ENCODE measurements at regions of chr9 and their contacts with region 1.

Region 1: GRCh38 chr9:71911253-71912074 is at the start of gene C9orf85:
- DNase-seq: peak; percentile 90 to 99 (median 96)
- ATAC-seq: peak; percentile 93 to 96 (median 95)
- H3K4me3 ChIP-seq: peak within 1 kb of the TSS; percentile 65 to 95
- H3K4me3 Mint-ChIP-seq: peak within 1 kb of the TSS; percentile 98 to 100 (median 99)
- H3K27ac ChIP-seq: peak within 1 kb of the TSS; percentile 69
- H3K27ac Mint-ChIP-seq: peak within 1 kb of the TSS; percentile 97 to 98
- H3K4me1 ChIP-seq: peaks cover 11 to 21% of the 10 kb centered on the region in 2 experiments
- H3K4me1 Mint-ChIP-seq: peaks cover 68 to 78% (median 75%) of the 10 kb centered on the region in 3 donors
- H3K27me3 ChIP-seq: no peaks in the 10 kb centered on the region
- H3K27me3 Mint-ChIP-seq: no peaks in the 10 kb centered on the region
- total RNA-seq, gene C9orf85: 6.1 to 10.0 (median 7.6) TPM

Region 2: GRCh38 chr9:71897577-71897976 is 13.9 kb before region 1 on chr9:
- CTCF ChIA-PET with region 1: interaction called, 4 to 8 read pairs
- POLR2A ChIA-PET with region 1: interaction called in 1 of 2 experiments, 12 read pairs
- DNase-seq: peak in 6 of 35 experiments; percentile 4 to 59 (median 12)
- ATAC-seq: peak; percentile 81 to 97 (median 90)
- H3K4me3 ChIP-seq: no peak overlapping the region
- H3K4me3 Mint-ChIP-seq: peak overlapping the region in 2 of 3 donors; percentile 0 to 32
- H3K27ac ChIP-seq: peak overlapping the region; percentile 30
- H3K27ac Mint-ChIP-seq: peak overlapping the region in 1 of 2 donors; percentile 67
- H3K4me1 ChIP-seq: peaks cover 32 to 55% of the 10 kb centered on the region in 2 experiments
- H3K4me1 Mint-ChIP-seq: peaks cover 79 to 86% (median 81%) of the 10 kb centered on the region in 3 donors
- H3K27me3 ChIP-seq: no peaks in the 10 kb centered on the region
- H3K27me3 Mint-ChIP-seq: no peaks in the 10 kb centered on the region

Measured in T-cell (primary cell).